ENCODE measurements at regions of chr12 and their contacts with region 1.

Region 1: DNA sequence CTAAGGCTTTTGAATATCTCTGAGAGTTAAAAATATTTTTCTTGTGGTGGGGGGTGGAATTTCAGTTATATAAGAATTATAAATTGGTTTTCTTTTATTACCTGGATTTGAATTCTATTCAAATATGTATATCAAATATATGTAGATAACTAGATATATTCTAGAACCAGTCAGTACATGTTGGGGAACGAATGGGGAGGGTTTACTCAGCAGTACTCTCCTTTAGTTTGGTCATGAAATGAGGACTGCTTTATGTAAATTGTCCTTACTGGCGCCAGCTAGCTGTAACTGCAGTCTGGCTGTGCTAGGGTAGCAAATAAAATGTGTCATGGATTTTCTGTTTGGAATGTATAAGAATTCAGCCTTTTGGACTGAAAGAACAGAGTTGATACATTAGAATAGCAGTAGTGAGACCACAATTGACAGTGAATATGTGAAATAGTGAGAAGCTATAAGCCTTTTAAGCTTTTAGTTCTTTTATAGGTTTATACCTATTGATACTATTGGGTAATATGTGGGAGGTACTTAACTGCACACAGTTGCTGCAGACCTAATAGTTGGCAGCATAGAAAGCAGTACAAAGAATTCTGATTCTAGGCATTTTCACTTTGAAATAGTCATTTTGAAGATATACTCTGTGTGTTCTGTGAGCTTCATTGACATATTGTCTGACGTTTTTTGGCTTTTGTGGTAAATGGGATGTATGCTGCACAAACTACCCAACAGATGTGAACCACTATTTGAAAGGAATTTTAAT is 29.0 kb downstream of the ATF7IP start:
- DNase-seq: peak; percentile 74 to 84 (median 75)
- H3K4me3 ChIP-seq: peak overlapping the region in 1 of 2 donors; percentile 25
- H3K4me3 Mint-ChIP-seq: peak overlapping the region; percentile 78 to 89 (median 83)
- H3K27ac ChIP-seq: peak overlapping the region; percentile 73
- H3K27ac Mint-ChIP-seq: peak overlapping the region; percentile 93 to 98 (median 97)
- H3K4me1 ChIP-seq: peaks cover 98% of the 10 kb centered on the region
- H3K4me1 Mint-ChIP-seq: peaks cover 55 to 94% (median 75%) of the 10 kb centered on the region in 4 donors
- H3K27me3 ChIP-seq: no peaks in the 10 kb centered on the region
- H3K27me3 Mint-ChIP-seq: no peaks in the 10 kb centered on the region

Region 2: GRCh38 chr12:14373217-14373616 is 21.3 kb before region 1 on chr12:
- CTCF ChIA-PET with region 1: interaction called, 4 read pairs
- POLR2A ChIA-PET with region 1: interaction called, 15 read pairs
- intact Hi-C with region 1: no loop called
- DNase-seq: no peak
- H3K4me3 ChIP-seq: no peak overlapping the region
- H3K4me3 Mint-ChIP-seq: peak overlapping the region; percentile 3 to 86 (median 53)
- H3K27ac ChIP-seq: peak overlapping the region; percentile 36
- H3K27ac Mint-ChIP-seq: peak overlapping the region; percentile 10 to 83 (median 65)
- H3K4me1 ChIP-seq: peaks cover 84% of the 10 kb centered on the region
- H3K4me1 Mint-ChIP-seq: peaks cover 42 to 69% (median 56%) of the 10 kb centered on the region in 4 donors
- H3K27me3 ChIP-seq: no peaks in the 10 kb centered on the region
- H3K27me3 Mint-ChIP-seq: no peaks in the 10 kb centered on the region

Region 3: DNA sequence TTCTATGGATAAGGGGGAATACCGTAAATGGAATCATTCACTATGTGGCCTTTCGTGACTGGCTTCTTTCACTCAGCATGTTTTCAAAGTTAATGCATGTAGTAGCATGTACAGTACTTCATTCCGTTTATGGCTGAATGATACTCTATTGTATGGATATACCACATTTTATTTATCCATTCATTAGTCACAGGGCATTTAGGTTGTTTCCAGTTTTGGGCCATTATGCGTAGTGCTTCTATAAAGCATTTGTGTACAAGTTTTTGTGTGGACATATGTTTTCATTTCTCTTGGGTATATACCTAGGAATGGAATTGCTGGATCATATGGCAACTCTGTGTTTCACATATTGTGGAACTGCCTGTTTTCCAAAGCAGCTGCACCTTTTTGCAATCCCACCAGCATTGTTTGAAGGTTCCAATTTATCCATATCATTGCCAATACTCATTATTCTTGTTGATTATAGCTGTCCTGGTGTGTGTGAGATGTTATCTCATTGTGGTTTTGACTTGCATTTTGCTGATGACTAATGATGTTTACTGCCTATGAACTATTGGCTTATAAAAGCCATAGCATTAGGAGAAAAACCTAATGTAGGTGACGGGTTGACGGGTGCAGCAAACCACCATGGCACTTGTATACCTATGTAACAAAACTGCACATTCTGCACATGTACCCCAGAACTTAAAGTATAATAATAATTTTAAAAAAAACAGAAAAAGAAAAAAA is 16.5 kb after region 1 on chr12:
- CTCF ChIA-PET with region 1: interaction called, 30 read pairs
- POLR2A ChIA-PET with region 1: interaction called, 22 read pairs
- intact Hi-C with region 1: loop called (anchors 1 kb)
- DNase-seq: peak; percentile 50 to 74 (median 65)
- H3K4me3 ChIP-seq: no peak overlapping the region
- H3K4me3 Mint-ChIP-seq: peak overlapping the region in 6 of 8 donors; percentile 31 to 83 (median 58)
- H3K27ac ChIP-seq: no peak overlapping the region
- H3K27ac Mint-ChIP-seq: peak overlapping the region; percentile 5 to 84 (median 32)
- H3K4me1 ChIP-seq: peaks cover 94% of the 10 kb centered on the region
- H3K4me1 Mint-ChIP-seq: peaks cover 50 to 72% (median 60%) of the 10 kb centered on the region in 4 donors
- H3K27me3 ChIP-seq: no peaks in the 10 kb centered on the region
- H3K27me3 Mint-ChIP-seq: no peaks in the 10 kb centered on the region

Region 4: GRCh38 chr12:14948672-14949071 is 554.2 kb after region 1 on chr12:
- CTCF ChIA-PET with region 1: no interaction called
- POLR2A ChIA-PET with region 1: no interaction called
- intact Hi-C with region 1: loop called (anchors 10 kb)
- DNase-seq: peak; percentile 76 to 86 (median 83)
- H3K4me3 ChIP-seq: peak overlapping the region; percentile 20 to 52
- H3K4me3 Mint-ChIP-seq: peak overlapping the region; percentile 73 to 93 (median 84)
- H3K27ac ChIP-seq: peak overlapping the region; percentile 92
- H3K27ac Mint-ChIP-seq: peak overlapping the region; percentile 94 to 100 (median 97)
- H3K4me1 ChIP-seq: peaks cover 91% of the 10 kb centered on the region
- H3K4me1 Mint-ChIP-seq: peaks cover 63 to 92% (median 85%) of the 10 kb centered on the region in 4 donors
- H3K27me3 ChIP-seq: no peaks in the 10 kb centered on the region
- H3K27me3 Mint-ChIP-seq: no peaks in the 10 kb centered on the region

Measured in CD4-positive, alpha-beta memory T cell (primary cell).